Prostate gland (tissue), 2 donors: ENCODE measurements at regions of chr17 and their contacts with region 1.

Region 1: GRCh38 chr17:8189711-8190477 is at the start of gene BORCS6:
- DNase-seq: peak; percentile 99
- H3K4me3 ChIP-seq: peak within 1 kb of the TSS; percentile 85 to 90
- H3K27ac ChIP-seq: peak within 1 kb of the TSS; percentile 91 to 95
- H3K4me1 ChIP-seq: peaks cover 14% of the 10 kb centered on the region
- H3K27me3 ChIP-seq: no peaks in the 10 kb centered on the region
- CTCF ChIP-seq: peak in 1 of 4 experiments; percentile 11
- POLR2A ChIP-seq: peak; percentile 84
- total RNA-seq, gene BORCS6: 9.6 to 19.1 TPM

Region 2: DNA sequence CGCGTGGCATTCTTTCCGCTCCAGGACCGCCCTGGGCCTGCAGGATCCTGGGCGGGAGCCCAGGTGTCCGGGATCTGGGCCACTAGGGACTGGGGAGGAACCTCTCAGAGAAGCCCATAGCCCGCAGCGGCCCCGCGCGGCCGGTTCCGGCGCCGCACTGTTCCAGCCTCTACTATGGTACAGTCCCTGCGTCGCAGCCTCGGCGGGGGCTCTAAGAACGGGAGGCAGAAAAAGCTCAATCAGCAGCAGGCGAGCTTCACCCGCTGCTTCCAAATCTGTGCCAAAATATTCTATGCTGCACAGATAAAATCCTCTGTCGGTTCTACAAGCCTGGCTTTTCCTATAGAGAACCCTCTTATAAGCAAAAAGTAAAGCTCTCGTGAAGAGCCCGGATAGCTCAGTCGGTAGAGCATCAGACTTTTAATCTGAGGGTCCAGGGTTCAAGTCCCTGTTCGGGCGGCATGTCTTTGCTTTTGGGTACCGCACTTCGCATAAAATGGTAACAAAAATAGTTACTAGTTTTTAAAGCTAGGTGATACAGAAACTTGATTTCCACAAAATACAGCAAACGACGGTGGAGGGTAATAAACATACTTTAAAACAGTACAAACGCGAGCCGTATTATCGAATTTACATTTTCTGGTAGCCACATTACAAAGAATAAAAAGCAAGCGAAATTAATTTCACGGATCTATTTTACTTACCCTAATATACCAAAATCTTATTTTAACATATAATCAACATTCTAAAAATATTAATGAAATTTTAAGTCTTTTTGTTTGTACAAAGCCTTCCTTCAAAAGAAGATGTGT is 70.9 kb before region 1 on chr17:
- intact Hi-C with region 1: loop called (anchors 5 kb)
- DNase-seq: peak; percentile 87
- H3K4me3 ChIP-seq: peak overlapping the region; percentile 34 to 44
- H3K27ac ChIP-seq: peak overlapping the region; percentile 78 to 82
- H3K4me1 ChIP-seq: peaks cover 10% of the 10 kb centered on the region
- H3K27me3 ChIP-seq: no peaks in the 10 kb centered on the region
- CTCF ChIP-seq: peak; percentile 74 to 94 (median 84)
- POLR2A ChIP-seq: peak; percentile 3

Region 3: DNA sequence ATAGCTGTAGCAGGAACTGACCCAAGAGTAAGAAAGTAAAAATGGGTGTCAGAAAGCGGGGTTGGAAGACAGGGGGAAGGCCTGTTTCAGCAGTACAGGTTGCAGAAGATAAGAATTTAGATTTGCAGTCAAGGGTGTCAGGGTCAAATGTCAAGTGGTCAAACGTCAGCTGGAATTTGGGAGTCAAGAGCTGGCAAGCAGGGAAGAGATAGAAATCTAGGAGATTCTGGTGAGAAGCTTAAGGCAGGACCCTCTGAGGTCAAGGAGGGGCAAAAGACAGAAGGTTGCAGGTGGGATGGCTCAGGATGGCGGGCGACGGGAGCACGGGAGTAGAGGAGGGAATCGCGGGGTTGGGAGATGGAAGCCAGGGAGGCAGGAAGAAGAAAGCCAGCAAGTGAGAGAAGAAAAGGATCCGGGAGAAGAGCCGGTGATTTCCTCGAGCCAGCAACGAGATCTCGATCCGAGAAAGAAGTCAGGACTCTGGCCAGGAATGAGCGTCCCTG is 105.0 kb after region 1 on chr17:
- intact Hi-C with region 1: loop called (anchors 5 kb)
- DNase-seq: no peak
- H3K4me3 ChIP-seq: peak overlapping the region; percentile 47 to 64
- H3K27ac ChIP-seq: peak overlapping the region; percentile 87 to 93
- H3K4me1 ChIP-seq: peaks cover 3% of the 10 kb centered on the region
- H3K27me3 ChIP-seq: no peaks in the 10 kb centered on the region
- CTCF ChIP-seq: no peak
- POLR2A ChIP-seq: no peak